ENCODE measurements at regions of chr10 and their contacts with region 1.

Region 1: GRCh38 chr10:97072851-97073665 is 112.7 kb downstream of the SLIT1 start:
- DNase-seq: peak; percentile 86
- ATAC-seq: peak; percentile 74
- H3K4me3 Mint-ChIP-seq: no peak overlapping the region
- H3K27ac Mint-ChIP-seq: no peak overlapping the region
- H3K4me1 Mint-ChIP-seq: peaks cover 12% of the 10 kb centered on the region
- H3K27me3 Mint-ChIP-seq: peaks cover 12% of the 10 kb centered on the region

Region 2: GRCh38 chr10:97010695-97011206 is 62.3 kb before region 1 on chr10:
- CTCF ChIA-PET with region 1: no interaction called
- DNase-seq: peak; percentile 33
- ATAC-seq: no peak
- H3K4me3 Mint-ChIP-seq: no peak overlapping the region
- H3K27ac Mint-ChIP-seq: no peak overlapping the region
- H3K4me1 Mint-ChIP-seq: peaks cover 7% of the 10 kb centered on the region
- H3K27me3 Mint-ChIP-seq: peaks cover 2% of the 10 kb centered on the region

Region 3: GRCh38 chr10:97096261-97097083 is 23.4 kb after region 1 on chr10:
- CTCF ChIA-PET with region 1: interaction called, 14 read pairs
- DNase-seq: peak; percentile 44
- ATAC-seq: peak; percentile 67
- H3K4me3 Mint-ChIP-seq: no peak overlapping the region
- H3K27ac Mint-ChIP-seq: no peak overlapping the region
- H3K4me1 Mint-ChIP-seq: peaks cover 17% of the 10 kb centered on the region
- H3K27me3 Mint-ChIP-seq: peaks cover 37% of the 10 kb centered on the region

Region 4: GRCh38 chr10:97123765-97124164 is 50.7 kb after region 1 on chr10:
- CTCF ChIA-PET with region 1: interaction called, 40 read pairs
- DNase-seq: no peak
- ATAC-seq: no peak
- H3K4me3 Mint-ChIP-seq: no peak overlapping the region
- H3K27ac Mint-ChIP-seq: no peak overlapping the region
- H3K4me1 Mint-ChIP-seq: no peaks in the 10 kb centered on the region
- H3K27me3 Mint-ChIP-seq: peaks cover 27% of the 10 kb centered on the region

Region 5: DNA sequence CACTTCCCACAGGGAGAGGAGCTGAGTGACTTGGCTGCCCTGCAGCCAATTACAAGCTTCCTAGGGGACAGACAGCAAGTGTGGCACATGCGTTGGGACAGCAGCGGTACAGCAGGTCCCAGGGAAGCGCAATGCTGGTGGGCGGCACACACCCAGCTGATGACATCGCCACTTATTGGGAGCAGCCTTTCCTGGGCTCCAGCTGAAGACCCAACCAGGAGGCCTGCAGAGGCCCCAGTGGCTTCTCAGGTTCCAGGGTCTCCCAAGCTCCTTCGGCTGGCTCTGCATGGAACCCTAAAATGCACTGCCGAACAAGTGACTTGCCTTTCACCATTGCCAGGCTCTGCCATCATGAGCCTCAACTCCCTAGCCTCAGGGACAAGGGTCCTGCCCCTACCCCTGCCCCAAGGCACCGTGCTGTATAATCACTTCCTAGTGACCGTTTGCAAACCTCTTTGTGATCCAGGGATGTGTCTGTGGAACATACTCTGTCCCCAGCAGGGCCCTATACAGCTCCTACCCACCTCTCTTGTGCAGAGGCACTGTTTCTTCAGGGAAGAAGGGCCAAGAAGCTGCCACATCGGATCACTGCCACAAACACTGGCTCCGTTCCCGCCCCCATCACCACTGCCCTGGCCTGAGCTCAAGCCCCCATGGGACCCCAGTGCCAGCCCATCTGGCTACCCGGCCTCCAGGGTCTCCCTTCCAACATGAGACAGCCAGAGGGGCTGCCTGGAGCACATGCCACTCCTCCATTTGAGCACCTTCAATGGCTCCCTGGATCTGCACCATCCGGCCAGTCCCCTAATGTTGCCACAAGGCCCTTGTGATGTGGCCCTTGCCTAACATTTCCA is 132.0 kb after region 1 on chr10:
- CTCF ChIA-PET with region 1: interaction called, 158 read pairs
- DNase-seq: no peak
- ATAC-seq: no peak
- H3K4me3 Mint-ChIP-seq: no peak overlapping the region
- H3K27ac Mint-ChIP-seq: no peak overlapping the region
- H3K4me1 Mint-ChIP-seq: peaks cover 10% of the 10 kb centered on the region
- H3K27me3 Mint-ChIP-seq: peaks cover 3% of the 10 kb centered on the region

Region 6: GRCh38 chr10:97217299-97217698 is 144.2 kb after region 1 on chr10:
- CTCF ChIA-PET with region 1: interaction called, 158 read pairs
- DNase-seq: no peak
- ATAC-seq: no peak
- H3K4me3 Mint-ChIP-seq: no peak overlapping the region
- H3K27ac Mint-ChIP-seq: peak overlapping the region; percentile 70
- H3K4me1 Mint-ChIP-seq: peaks cover 33% of the 10 kb centered on the region
- H3K27me3 Mint-ChIP-seq: no peaks in the 10 kb centered on the region

Measured in activated CD8-positive, alpha-beta memory T cell treated with anti-CD3 and anti-CD28 coated beads, Interleukin-2, amount 10 ng/mL, durations not matched to agents 7 days and 5 days (primary cell).